ENCODE measurements at regions of chr3 and their contacts with region 1.

Region 1: DNA sequence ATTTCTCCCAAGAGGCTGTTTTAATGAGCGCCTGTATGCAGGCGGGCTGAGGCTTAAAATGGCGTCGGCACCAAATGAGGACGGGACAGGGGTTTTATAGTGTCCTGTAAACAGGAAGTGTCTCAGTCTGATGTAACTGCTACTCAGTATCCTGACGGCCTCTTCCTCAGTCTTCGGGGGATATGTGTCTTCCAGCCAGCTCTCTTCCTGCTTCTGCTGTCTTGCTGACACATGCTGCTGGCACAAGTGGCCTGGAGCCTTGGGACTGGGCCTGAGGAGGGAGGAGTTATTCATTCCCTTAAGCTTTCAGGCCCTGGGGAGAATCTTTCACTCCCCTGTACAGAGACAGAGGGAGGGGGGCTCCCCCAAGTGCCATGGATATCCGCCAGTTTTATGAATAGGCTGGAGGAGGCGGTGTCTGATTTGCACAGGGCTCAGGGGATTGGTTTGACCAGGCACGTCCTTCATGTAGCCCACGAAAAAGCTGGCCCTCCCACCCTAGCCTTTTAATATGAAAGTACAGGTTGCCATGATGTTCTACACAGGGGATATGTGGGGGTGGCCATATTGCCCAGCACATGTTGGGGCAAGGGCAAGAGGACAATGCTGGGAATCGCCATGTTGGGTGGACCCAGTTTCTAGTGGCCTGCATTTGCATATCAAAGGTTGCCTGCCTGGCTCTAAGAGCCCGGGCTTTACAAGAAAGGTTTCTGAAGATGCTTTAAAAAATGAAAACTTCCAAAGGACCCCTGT is 19.9 kb downstream of the NDUFB4 start:
- DNase-seq: no peak
- ATAC-seq: peak; percentile 45; the same call in 2 of the 3 replicates
- H3K4me3 ChIP-seq: no peak overlapping the region
- H3K27ac ChIP-seq: no peak overlapping the region
- H3K4me1 ChIP-seq: no peaks in the 10 kb centered on the region; a peak in 1 of 5 replicates
- H3K27me3 ChIP-seq: no peaks in the 10 kb centered on the region
- CTCF ChIP-seq: no peak
- EP300 ChIP-seq: no peak
- POLR2A ChIP-seq: no peak
- RAD21 ChIP-seq: no peak

Region 2: GRCh38 chr3:120572027-120572426 is 44.0 kb before region 1 on chr3:
- CTCF ChIA-PET with region 1: no interaction called
- POLR2A ChIA-PET with region 1: no interaction called
- in situ Hi-C with region 1: no loop called
- intact Hi-C with region 1: no loop called
- DNase-seq: peak in 2 of 4 experiments; percentile 9 to 49
- ATAC-seq: no peak; the same call in 2 of the 3 replicates
- H3K4me3 ChIP-seq: no peak overlapping the region
- H3K27ac ChIP-seq: peak overlapping the region; percentile 58; the same call in 2 of the 3 replicates
- H3K4me1 ChIP-seq: peaks cover 0 to 15% of the 10 kb centered on the region in 2 experiments; a peak in 4 of 5 replicates
- H3K27me3 ChIP-seq: no peaks in the 10 kb centered on the region
- CTCF ChIP-seq: no peak
- EP300 ChIP-seq: peak; percentile 35; the same call in 1 of the 2 replicates
- POLR2A ChIP-seq: no peak
- RAD21 ChIP-seq: no peak

Region 3: DNA sequence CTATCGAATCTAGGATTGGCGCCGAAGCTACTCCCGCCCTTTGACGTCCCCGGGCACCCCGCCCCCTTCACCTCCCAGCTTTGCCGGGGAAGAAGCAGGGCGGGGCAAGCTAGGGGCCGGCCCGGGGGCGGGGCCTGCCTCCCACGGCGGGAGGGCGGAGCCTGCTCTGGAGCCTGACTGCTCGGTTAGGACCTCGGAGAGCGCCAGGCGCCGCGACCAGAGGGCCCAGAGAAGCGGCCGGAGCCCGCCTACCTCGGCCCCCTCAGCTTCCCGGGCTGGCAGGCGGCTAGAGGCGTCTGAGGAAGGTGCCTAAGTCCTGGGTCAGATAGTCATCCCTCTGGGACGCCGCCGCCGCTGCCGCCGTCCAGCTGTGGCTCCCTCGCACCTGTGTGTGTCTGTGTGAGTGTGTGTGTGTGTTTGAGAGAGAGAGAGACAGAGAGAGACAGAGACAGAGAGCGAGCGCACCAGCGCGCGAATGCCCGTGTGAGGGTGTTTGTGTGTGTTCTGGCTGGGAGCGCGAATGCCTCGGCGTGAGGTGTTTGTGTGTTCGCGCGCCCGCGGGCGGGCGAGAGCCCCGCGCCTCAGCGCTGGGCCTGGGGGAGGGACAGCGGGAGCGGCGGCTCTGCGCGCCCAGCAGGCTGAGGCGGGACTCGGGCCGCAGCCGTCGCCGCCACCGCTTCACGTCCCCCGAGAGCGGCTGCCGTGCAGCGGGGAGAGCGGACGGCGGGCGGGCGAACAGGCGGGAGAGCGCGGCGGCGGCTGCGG is 292.2 kb after region 1 on chr3 and contains the start of gene STXBP5L:
- CTCF ChIA-PET with region 1: no interaction called
- POLR2A ChIA-PET with region 1: no interaction called
- in situ Hi-C with region 1: no loop called
- intact Hi-C with region 1: loop called (anchors 10 kb)
- DNase-seq: peak; percentile 78 to 88 (median 82)
- ATAC-seq: peak; percentile 100
- H3K4me3 ChIP-seq: peak within 1 kb of the TSS; percentile 33
- H3K27ac ChIP-seq: no peak within 1 kb of the TSS
- H3K4me1 ChIP-seq: peaks cover 0 to 9% of the 10 kb centered on the region in 2 experiments; a peak in 2 of 5 replicates
- H3K27me3 ChIP-seq: peaks cover 0 to 6% of the 10 kb centered on the region in 2 experiments; a peak in 1 of 5 replicates
- CTCF ChIP-seq: no peak
- EP300 ChIP-seq: no peak
- POLR2A ChIP-seq: no peak
- RAD21 ChIP-seq: no peak
- polyA plus RNA-seq, gene STXBP5L: 0.03 TPM

Measured in K562 (cell line).